ENCODE measurements at regions of chr19 and their contacts with region 1.

Region 1: GRCh38 chr19:29873024-29873800 is 61.4 kb downstream of the CCNE1 start:
- DNase-seq: peak; percentile 68 to 85
- ATAC-seq: peak; percentile 79 to 95
- H3K4me3 ChIP-seq: peak overlapping the region; percentile 70
- H3K27ac ChIP-seq: peak overlapping the region; percentile 74 to 84
- H3K4me1 ChIP-seq: peaks cover 9% of the 10 kb centered on the region
- CTCF ChIP-seq: peak; percentile 99
- EP300 ChIP-seq: no peak
- POLR2A ChIP-seq: no peak
- RAD21 ChIP-seq: peak; percentile 89 to 100

Region 2: GRCh38 chr19:29724102-29724641 is 149.0 kb before region 1 on chr19:
- CTCF ChIA-PET with region 1: interaction called, 362 read pairs
- POLR2A ChIA-PET with region 1: no interaction called
- DNase-seq: no peak
- ATAC-seq: no peak
- H3K4me3 ChIP-seq: no peak overlapping the region
- H3K27ac ChIP-seq: no peak overlapping the region
- H3K4me1 ChIP-seq: no peaks in the 10 kb centered on the region
- CTCF ChIP-seq: no peak
- EP300 ChIP-seq: no peak
- POLR2A ChIP-seq: no peak
- RAD21 ChIP-seq: no peak

Region 3: GRCh38 chr19:29771708-29772414 is 101.4 kb before region 1 on chr19:
- CTCF ChIA-PET with region 1: interaction called, 152 read pairs
- POLR2A ChIA-PET with region 1: no interaction called
- DNase-seq: peak; percentile 78 to 97
- ATAC-seq: peak; percentile 95 to 96
- H3K4me3 ChIP-seq: no peak overlapping the region
- H3K27ac ChIP-seq: 0 out of 6 replicates have a peak overlapping the region, but pooled peaks of 1 of the 2 experiments have one; percentile 24
- H3K4me1 ChIP-seq: peaks cover 3% of the 10 kb centered on the region; the same call in 1 of the 3 replicates
- CTCF ChIP-seq: peak; percentile 89
- EP300 ChIP-seq: no peak
- POLR2A ChIP-seq: no peak
- RAD21 ChIP-seq: peak; percentile 72 to 77

Region 4: DNA sequence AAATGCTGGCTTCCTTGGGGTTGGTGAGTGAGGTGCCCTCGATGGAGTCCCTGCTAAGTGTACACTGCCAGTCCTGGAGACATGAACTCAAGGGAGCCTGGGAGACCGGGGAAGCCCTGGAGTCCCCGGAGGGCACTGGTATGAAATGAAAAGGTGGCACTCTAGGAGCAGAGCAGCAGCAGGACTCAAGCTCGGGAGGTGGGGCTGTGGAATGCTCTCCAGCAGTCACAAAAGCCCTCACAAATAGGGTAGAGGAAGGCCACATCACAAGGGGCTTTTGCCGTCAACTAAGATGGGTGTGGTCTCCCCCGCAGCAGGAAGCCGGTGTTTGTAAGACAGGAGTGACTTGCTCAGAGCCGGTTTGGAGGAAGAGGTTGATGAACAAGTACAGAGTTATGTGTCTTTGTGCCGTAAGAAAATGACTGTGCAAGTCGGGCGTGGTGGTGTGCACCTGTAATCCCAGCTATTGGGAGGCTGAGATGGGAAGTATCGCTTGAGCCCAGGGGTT is 42.1 kb before region 1 on chr19:
- CTCF ChIA-PET with region 1: interaction called, 10 read pairs
- POLR2A ChIA-PET with region 1: no interaction called
- DNase-seq: peak in 1 of 2 experiments; percentile 71
- ATAC-seq: peak; percentile 70
- H3K4me3 ChIP-seq: no peak overlapping the region
- H3K27ac ChIP-seq: 0 out of 6 replicates have a peak overlapping the region, but pooled peaks of 1 of the 2 experiments have one; percentile 2
- H3K4me1 ChIP-seq: peaks cover 12% of the 10 kb centered on the region; the same call in 2 of the 3 replicates
- CTCF ChIP-seq: no peak
- EP300 ChIP-seq: no peak
- POLR2A ChIP-seq: no peak
- RAD21 ChIP-seq: no peak

Region 5: GRCh38 chr19:29858000-29858596 is 15.1 kb before region 1 on chr19:
- CTCF ChIA-PET with region 1: interaction called, 348 read pairs
- POLR2A ChIA-PET with region 1: no interaction called
- DNase-seq: peak; percentile 60 to 63
- ATAC-seq: peak; percentile 78 to 86
- H3K4me3 ChIP-seq: no peak overlapping the region
- H3K27ac ChIP-seq: no peak overlapping the region
- H3K4me1 ChIP-seq: no peaks in the 10 kb centered on the region
- CTCF ChIP-seq: peak; percentile 68
- EP300 ChIP-seq: no peak
- POLR2A ChIP-seq: no peak
- RAD21 ChIP-seq: peak; percentile 63

Region 6: DNA sequence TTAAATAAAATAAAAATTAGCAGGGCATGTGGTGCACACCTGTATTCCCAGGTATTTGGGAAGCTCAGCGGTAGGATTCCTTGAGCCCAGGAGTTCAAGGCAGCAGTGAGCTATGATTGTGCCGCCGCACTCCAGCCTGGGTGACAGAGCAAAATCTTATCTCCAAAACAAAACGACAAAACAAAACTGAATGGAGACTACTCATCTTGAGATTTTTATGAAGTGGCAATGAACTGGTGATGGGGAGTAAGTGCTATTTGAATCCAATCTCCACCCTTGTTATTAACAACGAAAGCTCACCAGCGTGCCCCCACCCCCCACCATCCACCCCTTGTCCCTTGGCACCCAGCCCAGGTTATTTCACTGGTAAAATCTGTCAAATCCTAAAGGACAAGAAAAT is 23.6 kb after region 1 on chr19:
- CTCF ChIA-PET with region 1: interaction called, 16 read pairs
- POLR2A ChIA-PET with region 1: no interaction called
- DNase-seq: no peak
- ATAC-seq: no peak; a peak in 1 of 6 replicates
- H3K4me3 ChIP-seq: no peak overlapping the region
- H3K27ac ChIP-seq: no peak overlapping the region
- H3K4me1 ChIP-seq: no peaks in the 10 kb centered on the region
- CTCF ChIP-seq: no peak
- EP300 ChIP-seq: no peak
- POLR2A ChIP-seq: no peak
- RAD21 ChIP-seq: no peak

Region 7: DNA sequence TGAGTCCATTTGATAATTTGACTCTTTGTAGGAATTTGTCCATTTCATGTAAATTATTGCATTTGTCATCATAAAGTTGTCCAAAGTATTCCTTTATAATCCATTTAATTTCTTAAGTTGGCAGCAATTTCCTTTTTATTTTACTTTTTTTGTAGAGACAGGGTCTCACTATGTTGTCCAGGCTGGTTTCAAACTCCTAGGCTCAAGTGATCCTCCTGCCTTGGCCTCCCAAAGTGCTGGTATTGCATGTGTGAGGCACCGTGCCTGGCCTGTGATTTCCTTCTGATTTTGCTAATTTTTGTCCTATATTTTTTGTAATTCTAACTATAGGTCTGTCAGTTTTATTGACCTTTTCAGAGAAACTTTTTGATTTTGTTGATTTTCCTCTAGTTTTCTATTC is 153.7 kb after region 1 on chr19:
- CTCF ChIA-PET with region 1: no interaction called
- POLR2A ChIA-PET with region 1: no interaction called
- DNase-seq: no peak
- ATAC-seq: no peak
- H3K4me3 ChIP-seq: no peak overlapping the region
- H3K27ac ChIP-seq: no peak overlapping the region
- H3K4me1 ChIP-seq: peaks cover 14% of the 10 kb centered on the region
- CTCF ChIP-seq: no peak
- EP300 ChIP-seq: no peak
- POLR2A ChIP-seq: no peak
- RAD21 ChIP-seq: no peak

Region 8: GRCh38 chr19:30105727-30106126 is 232.5 kb after region 1 on chr19:
- CTCF ChIA-PET with region 1: no interaction called
- POLR2A ChIA-PET with region 1: no interaction called
- DNase-seq: no peak
- ATAC-seq: no peak
- H3K4me3 ChIP-seq: no peak overlapping the region
- H3K27ac ChIP-seq: no peak overlapping the region
- H3K4me1 ChIP-seq: no peaks in the 10 kb centered on the region
- CTCF ChIP-seq: no peak
- EP300 ChIP-seq: no peak
- POLR2A ChIP-seq: no peak
- RAD21 ChIP-seq: no peak